Posterior cingulate gyrus (tissue), 11 donors: ENCODE measurements at regions of chr1 and their contacts with region 1.

Region 1: DNA sequence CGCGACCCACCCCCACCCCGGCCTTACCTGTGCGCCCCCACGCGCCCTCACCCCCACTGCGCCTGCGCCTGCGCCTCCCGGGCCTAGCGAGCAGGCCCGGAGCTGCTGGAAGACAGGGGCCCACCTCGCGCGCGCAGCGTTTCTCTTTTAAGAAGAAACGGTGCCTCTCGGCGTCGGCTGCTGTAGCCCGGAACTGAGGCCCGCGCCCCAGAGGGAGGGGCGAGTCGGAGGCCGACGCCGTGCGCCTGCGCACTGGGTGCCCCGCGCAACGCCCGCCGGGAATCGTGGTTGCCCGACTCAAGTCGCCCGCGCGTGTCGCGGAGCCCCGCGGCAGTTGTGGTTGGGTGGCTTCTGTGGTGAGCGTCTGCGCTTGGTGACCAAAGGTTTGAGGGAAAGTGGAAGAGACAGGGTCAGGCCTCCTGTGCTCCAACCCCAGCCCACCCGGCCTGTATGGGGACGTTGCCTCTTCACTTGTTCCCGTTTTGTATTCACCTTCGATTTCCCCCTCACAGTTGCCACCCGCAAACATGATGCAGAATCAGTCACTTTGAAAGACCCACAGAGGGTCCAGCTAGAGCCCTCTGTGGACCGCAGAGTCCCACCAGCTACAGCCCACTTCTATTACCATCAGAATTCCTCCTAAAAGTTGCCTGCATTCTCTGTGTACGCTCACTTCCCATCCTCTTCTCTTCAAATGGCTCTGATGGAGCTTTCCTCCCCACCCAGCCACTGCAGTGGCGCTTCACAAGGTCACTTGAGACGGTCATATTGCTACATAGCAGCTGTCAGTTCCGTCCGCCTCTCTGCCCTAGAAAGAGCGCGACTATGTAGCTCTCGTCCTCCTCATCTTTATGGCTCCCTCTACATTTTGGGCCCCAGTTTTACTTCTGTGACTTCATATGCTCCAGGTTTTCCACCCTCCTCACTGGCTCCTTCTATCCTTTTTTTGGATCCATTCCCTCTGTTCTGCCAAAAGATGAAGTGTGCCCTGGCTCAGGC is at the start of gene ZNF692:
- DNase-seq: peak; percentile 94 to 99 (median 97)

Region 2: GRCh38 chr1:248343456-248343855 is 515.7 kb before region 1 on chr1:
- intact Hi-C with region 1: no loop called
- DNase-seq: no peak

Region 3: GRCh38 chr1:248837794-248838356 is 21.3 kb before region 1 on chr1 and contains the start of gene ZNF672:
- intact Hi-C with region 1: loop called (anchors 1 kb)
- DNase-seq: peak; percentile 94 to 100 (median 98)

Region 4: GRCh38 chr1:248872752-248873408 is 13.7 kb after region 1 on chr1:
- intact Hi-C with region 1: loop called (anchors 1 kb)
- DNase-seq: peak in 8 of 10 donors; percentile 32 to 89 (median 48)

Region 5: GRCh38 chr1:248924696-248925532 is 65.7 kb after region 1 on chr1:
- intact Hi-C with region 1: no loop called
- DNase-seq: peak in 6 of 10 donors; percentile 25 to 91 (median 43)